ENCODE measurements at regions of chr9 and their contacts with region 1.

Region 1: DNA sequence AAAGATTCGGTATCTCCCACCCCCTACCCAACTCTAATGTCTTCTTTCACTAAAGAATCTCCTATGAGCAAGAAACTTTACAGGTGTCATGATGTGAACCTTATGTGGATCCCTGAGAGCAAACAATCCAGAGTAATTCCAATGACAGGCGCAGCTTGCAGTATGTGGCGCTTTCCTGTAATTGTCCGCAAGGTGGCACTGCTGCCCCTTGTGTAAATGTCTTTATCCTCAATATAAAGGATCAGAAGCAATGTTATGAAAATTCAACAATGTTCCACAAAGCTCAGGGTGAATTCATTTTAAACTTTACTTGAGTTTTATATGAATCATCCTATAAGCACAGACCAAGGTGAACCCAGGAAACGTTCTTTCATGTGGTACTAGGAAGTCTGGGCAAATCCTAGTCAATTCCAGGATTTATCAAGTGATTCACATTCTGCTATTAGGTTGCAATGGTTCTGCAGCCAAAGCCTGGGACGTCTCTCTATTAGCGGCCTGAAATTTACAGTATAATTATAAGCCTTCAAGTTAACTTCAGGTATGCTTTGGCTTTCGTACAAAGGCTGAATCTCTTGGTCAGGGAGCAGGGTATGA is 113.7 kb downstream of the TRPM6 start:
- DNase-seq: peak; percentile 21
- H3K4me3 ChIP-seq: no peak overlapping the region
- CTCF ChIP-seq: peak; percentile 70

Region 2: GRCh38 chr9:74543145-74543544 is 230.8 kb before region 1 on chr9:
- CTCF ChIA-PET with region 1: no interaction called
- POLR2A ChIA-PET with region 1: no interaction called
- DNase-seq: no peak
- H3K4me3 ChIP-seq: no peak overlapping the region
- CTCF ChIP-seq: no peak

Region 3: DNA sequence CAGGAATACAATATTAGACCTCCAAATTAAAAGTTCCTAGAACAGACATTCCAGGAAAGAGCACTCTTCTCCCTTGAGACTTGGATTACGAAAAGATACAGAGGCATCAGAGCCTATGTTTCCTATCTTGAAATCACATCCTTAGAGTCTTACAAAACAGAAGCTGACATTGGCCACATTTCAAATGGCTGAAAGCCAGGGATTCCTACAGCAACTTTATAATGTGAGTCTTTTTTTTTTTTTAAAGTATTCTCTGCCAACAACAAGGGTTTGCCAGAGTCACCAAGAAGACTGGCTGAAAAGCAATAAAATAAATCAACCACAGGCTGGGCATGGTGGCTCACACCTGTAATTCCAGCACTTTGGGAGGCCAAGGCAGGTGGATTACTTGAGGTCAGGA is 50.7 kb after region 1 on chr9:
- CTCF ChIA-PET with region 1: no interaction called
- POLR2A ChIA-PET with region 1: no interaction called
- DNase-seq: no peak
- H3K4me3 ChIP-seq: no peak overlapping the region
- CTCF ChIP-seq: no peak

Region 4: DNA sequence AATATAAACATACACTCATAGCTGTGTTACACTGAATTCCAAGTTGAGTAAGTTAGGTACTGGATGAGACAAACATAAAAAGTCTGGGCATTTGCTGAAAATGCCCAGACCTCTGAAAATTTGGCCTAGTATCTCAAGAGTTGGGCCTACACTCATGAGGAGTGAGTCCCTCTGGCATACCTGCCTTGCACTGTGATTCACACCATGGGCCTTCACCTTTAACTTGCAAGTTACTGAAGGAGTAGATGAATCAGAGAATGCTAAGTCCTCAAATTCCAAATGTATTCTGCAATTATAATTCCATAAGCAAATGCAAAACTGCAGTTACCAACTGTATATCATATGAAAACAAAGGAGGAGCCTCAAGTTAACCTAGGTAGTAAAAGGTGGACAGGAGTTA is 211.1 kb after region 1 on chr9:
- CTCF ChIA-PET with region 1: interaction called, 24 read pairs
- POLR2A ChIA-PET with region 1: no interaction called
- DNase-seq: no peak
- H3K4me3 ChIP-seq: no peak overlapping the region
- CTCF ChIP-seq: no peak

Region 5: GRCh38 chr9:75019022-75019421 is 245.0 kb after region 1 on chr9:
- CTCF ChIA-PET with region 1: interaction called, 39 read pairs
- POLR2A ChIA-PET with region 1: no interaction called
- DNase-seq: no peak
- H3K4me3 ChIP-seq: no peak overlapping the region
- CTCF ChIP-seq: no peak

Region 6: DNA sequence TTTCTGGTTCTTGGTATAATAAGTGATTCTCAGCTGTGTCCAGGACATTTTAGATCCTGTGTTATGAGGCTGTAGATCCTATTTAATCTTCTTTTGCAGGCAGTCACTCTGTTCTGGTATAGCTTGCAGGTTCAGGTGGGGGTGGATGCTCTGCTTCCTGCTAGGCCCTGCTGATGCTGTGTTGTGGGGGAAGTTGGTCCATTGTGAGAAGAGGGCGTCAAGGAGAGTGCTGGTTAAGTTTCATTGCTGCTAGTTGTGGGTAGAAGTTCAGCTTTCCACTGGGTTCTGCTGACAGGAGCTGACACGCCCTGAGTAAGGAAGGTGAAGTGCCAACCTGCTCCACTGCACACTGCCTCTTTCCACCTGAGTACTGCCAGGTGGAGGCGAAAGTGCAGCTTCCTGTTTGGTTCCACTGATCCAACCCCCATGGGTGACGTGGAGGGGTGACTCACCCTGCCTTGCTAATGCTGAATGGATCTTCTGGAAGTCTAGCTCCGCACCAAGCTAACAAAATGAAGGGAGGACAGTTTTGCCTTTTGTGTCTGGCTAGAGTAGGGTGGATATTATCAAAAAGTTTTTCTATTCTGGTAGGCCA is 297.6 kb after region 1 on chr9:
- CTCF ChIA-PET with region 1: interaction called, 170 read pairs
- POLR2A ChIA-PET with region 1: no interaction called
- DNase-seq: no peak
- H3K4me3 ChIP-seq: no peak overlapping the region
- CTCF ChIP-seq: no peak

Region 7: DNA sequence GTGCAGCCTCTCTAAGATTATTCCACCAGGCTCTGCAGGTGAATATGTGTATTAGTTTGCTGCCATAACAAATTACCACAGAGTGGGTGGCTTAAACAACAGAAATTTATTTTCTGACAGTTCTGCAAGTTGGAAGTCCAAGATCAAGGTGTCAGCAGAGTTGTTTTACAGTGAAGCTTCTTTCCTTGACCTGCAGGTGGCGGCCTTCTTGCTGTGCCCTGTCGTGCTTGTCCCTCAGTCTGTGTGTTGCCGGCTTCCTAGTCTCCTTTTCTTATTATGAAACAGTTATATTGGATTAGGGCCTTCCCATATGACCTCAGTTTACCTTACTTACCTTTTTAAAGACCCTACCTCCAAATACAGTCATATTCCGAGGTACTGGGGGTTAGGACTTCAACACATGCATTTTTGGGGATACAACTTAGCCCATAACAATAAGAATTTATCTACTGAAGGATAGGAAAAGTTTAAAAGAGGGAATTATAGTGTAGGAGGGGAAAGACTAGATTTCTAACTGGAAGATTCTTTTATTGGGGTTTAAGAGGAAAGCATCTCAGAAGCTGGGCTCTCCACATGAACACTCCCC is 411.7 kb after region 1 on chr9:
- CTCF ChIA-PET with region 1: interaction called, 13 read pairs
- POLR2A ChIA-PET with region 1: no interaction called
- DNase-seq: no peak
- H3K4me3 ChIP-seq: no peak overlapping the region
- CTCF ChIP-seq: peak; percentile 65

Measured in AG04449 (cell line).